ENCODE measurements at regions of chr10 and their contacts with region 1.

Region 1: GRCh38 chr10:79347226-79347893 is at the start of gene PPIF:
- DNase-seq: peak; percentile 94
- ATAC-seq: peak; percentile 95
- H3K4me3 Mint-ChIP-seq: peak within 1 kb of the TSS; percentile 84
- H3K27ac Mint-ChIP-seq: peak within 1 kb of the TSS; percentile 90
- H3K4me1 Mint-ChIP-seq: peaks cover 25% of the 10 kb centered on the region
- H3K27me3 Mint-ChIP-seq: no peaks in the 10 kb centered on the region
- CTCF ChIP-seq: peak; percentile 47
- total RNA-seq, gene PPIF: 68.2 and 72.5 TPM in 2 replicates

Region 2: GRCh38 chr10:77873536-77874380 is 1473.6 kb before region 1 on chr10:
- CTCF ChIA-PET with region 1: no interaction called
- POLR2A ChIA-PET with region 1: no interaction called
- intact Hi-C with region 1: loop called (anchors 10 kb)
- DNase-seq: peak; percentile 46
- ATAC-seq: peak; percentile 79
- H3K4me3 Mint-ChIP-seq: peak overlapping the region; percentile 49
- H3K27ac Mint-ChIP-seq: peak overlapping the region; percentile 82
- H3K4me1 Mint-ChIP-seq: peaks cover 38% of the 10 kb centered on the region
- H3K27me3 Mint-ChIP-seq: no peaks in the 10 kb centered on the region
- CTCF ChIP-seq: no peak

Region 3: GRCh38 chr10:78302989-78303854 is 1044.1 kb before region 1 on chr10:
- CTCF ChIA-PET with region 1: no interaction called
- POLR2A ChIA-PET with region 1: interaction called, 3 read pairs
- intact Hi-C with region 1: loop called (anchors 1 kb)
- DNase-seq: peak; percentile 96
- ATAC-seq: peak; percentile 87
- H3K4me3 Mint-ChIP-seq: peak overlapping the region; percentile 92
- H3K27ac Mint-ChIP-seq: peak overlapping the region; percentile 93
- H3K4me1 Mint-ChIP-seq: peaks cover 47% of the 10 kb centered on the region
- H3K27me3 Mint-ChIP-seq: no peaks in the 10 kb centered on the region
- CTCF ChIP-seq: peak; percentile 44

Region 4: DNA sequence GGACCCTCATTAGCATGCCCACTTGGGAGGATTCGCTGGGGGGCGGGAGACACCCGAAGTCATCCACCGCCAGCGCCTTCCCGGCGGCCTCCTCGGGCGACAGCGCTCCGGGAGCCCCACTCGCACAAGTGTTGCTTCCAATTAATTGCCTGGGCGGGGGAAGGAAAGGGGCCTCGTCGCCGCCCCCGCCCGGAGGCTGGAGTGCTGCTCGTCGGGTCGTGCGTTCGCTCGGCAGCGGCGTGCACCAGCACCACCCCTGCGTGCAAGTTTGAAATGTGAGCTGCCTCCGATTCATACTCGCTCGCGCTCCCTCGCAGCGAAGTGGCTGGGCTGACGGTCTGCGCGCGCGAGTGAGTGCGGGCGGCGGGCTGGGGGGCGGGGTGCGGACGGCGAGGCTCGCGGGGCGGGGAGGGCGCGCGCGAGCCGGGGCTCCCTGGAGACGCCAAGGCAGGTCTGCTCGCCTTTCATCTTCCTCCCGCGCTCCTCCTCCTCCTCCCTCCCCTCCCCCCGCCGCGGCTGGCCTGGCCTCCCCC is 104.7 kb before region 1 on chr10:
- CTCF ChIA-PET with region 1: interaction called, 3 read pairs
- POLR2A ChIA-PET with region 1: interaction called, 37 read pairs
- intact Hi-C with region 1: loop called (anchors 1 kb)
- DNase-seq: peak; percentile 71
- ATAC-seq: peak; percentile 52
- H3K4me3 Mint-ChIP-seq: peak overlapping the region; percentile 84
- H3K27ac Mint-ChIP-seq: peak overlapping the region; percentile 50
- H3K4me1 Mint-ChIP-seq: peaks cover 57% of the 10 kb centered on the region
- H3K27me3 Mint-ChIP-seq: no peaks in the 10 kb centered on the region
- CTCF ChIP-seq: no peak

Region 5: GRCh38 chr10:79266543-79267312 is 80.6 kb before region 1 on chr10:
- CTCF ChIA-PET with region 1: no interaction called
- POLR2A ChIA-PET with region 1: no interaction called
- intact Hi-C with region 1: loop called (anchors 1 kb)
- DNase-seq: peak; percentile 40
- ATAC-seq: peak; percentile 68
- H3K4me3 Mint-ChIP-seq: peak overlapping the region; percentile 69
- H3K27ac Mint-ChIP-seq: peak overlapping the region; percentile 92
- H3K4me1 Mint-ChIP-seq: peaks cover 96% of the 10 kb centered on the region
- H3K27me3 Mint-ChIP-seq: no peaks in the 10 kb centered on the region
- CTCF ChIP-seq: no peak

Region 6: GRCh38 chr10:79316671-79317431 is 30.5 kb before region 1 on chr10:
- CTCF ChIA-PET with region 1: interaction called, 3 read pairs
- POLR2A ChIA-PET with region 1: interaction called, 9 read pairs
- intact Hi-C with region 1: loop called (anchors 1 kb)
- DNase-seq: peak; percentile 39
- ATAC-seq: peak; percentile 89
- H3K4me3 Mint-ChIP-seq: peak overlapping the region; percentile 48
- H3K27ac Mint-ChIP-seq: peak overlapping the region; percentile 56
- H3K4me1 Mint-ChIP-seq: peaks cover 43% of the 10 kb centered on the region
- H3K27me3 Mint-ChIP-seq: no peaks in the 10 kb centered on the region
- CTCF ChIP-seq: no peak

Region 7: DNA sequence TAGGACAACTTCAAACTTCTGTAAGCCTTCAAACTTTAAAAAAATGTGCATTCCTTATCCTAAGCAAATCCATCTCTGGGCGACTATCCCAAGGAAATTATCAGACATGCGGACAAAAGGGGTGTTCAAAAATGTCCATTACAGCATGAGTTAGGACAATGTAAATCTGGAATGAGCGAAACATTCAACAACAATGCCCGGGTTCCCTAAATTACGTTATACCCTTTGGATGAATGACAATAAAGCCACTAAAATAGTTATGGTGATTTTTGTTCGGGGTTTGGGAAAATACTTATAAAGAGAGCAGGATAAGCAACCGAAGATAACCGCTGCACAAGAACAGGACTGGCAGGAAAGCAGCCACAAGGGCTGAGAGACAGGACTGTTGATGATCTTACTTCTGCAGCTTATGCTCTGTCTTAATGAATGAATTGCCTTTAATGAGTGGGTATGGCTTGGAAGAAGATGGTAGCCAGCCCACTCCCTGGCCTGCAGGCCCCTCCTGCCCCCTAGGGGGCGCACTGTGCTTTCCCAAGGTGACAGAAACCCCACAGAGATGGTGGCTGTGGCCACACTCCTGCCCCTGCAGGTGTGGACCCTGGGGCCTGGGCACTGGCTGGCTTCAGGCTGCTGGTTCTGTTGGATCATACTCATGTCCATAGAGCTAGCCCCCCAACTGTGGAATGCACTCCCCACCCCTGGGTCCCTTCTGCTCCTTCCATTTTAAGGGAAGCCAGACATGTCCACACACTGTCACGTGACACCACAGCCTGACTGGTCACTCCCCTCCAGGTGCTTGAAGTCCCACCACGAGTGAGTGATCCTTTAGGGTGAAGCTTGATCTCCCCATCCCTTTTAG is 53.0 kb after region 1 on chr10:
- CTCF ChIA-PET with region 1: no interaction called
- POLR2A ChIA-PET with region 1: no interaction called
- intact Hi-C with region 1: no loop called
- DNase-seq: no peak
- ATAC-seq: no peak
- H3K4me3 Mint-ChIP-seq: no peak overlapping the region
- H3K27ac Mint-ChIP-seq: no peak overlapping the region
- H3K4me1 Mint-ChIP-seq: no peaks in the 10 kb centered on the region
- H3K27me3 Mint-ChIP-seq: no peaks in the 10 kb centered on the region
- CTCF ChIP-seq: no peak

Region 8: DNA sequence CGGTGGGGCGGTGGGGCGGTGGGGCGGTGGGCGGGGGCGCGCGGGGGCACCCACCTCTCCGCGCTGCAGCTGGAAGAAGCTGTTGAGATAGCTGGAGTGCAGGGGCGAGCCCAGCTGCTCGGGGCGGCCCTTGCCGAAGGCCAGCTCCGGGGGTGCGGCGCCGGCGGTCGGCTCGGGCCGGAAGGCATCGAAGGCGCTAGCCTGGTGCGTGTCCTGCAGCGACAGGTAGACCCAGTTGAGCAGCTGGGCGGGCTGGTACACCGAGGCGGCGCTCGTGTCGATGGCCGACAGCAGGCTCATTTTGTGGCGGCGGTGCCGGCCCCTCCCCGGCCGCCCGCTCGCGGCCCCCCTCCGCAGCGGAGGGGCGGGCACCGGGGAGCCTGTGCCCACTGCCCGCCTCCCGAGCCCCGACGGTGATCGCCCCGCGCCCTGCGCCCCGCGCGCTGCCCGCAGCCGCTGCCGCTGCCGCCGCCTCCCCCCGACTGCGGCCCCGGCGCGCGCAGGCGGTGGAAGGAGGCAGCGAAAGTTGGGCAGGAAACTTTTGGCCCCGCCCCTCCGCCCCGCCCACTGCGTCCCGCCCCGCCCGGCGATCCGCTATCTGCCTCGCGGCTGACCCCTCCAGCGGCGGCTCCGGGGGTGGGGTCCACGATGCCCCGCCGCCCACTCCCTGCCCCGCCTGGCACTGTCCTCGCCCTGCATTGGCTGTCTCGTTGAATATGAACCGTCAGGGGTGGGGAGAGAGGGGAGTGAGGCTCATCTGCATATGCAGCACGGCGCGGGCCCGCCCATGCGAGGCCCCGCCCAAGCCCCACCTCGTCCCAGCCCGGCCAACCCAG is 98.0 kb after region 1 on chr10 and contains the start of gene ZCCHC24:
- CTCF ChIA-PET with region 1: no interaction called
- POLR2A ChIA-PET with region 1: interaction called, 7 read pairs
- intact Hi-C with region 1: loop called (anchors 1 kb)
- DNase-seq: peak; percentile 92
- ATAC-seq: peak; percentile 93
- H3K4me3 Mint-ChIP-seq: peak within 1 kb of the TSS; percentile 87
- H3K27ac Mint-ChIP-seq: peak within 1 kb of the TSS; percentile 50
- H3K4me1 Mint-ChIP-seq: peaks cover 26% of the 10 kb centered on the region
- H3K27me3 Mint-ChIP-seq: peaks cover 2% of the 10 kb centered on the region
- CTCF ChIP-seq: no peak
- total RNA-seq, gene ZCCHC24: 1.1 and 1.3 TPM in 2 replicates